PC-9 (cell line): ENCODE measurements at regions of chr9 and their contacts with region 1.

Region 1: DNA sequence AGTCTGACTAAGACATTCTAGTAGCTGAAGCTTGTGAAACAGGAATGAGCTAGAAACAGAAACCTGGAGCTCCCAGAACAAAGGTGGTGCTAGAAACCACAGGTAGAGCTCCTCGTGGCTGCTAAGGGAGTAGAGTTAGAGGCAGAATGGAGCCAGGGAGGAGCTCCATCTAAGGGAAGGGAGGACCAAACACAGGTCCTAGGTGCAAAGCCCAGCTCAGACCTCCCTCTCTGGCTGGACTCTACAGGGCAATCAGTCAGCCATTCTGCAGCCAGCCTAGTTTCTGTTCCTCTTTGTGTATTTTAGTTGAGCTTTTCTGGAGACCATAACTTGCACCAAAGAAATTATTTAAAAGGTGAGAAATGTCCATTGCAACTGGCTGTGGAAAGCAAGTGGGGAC is 70.4 kb downstream of the CRB2 start:
- DNase-seq: peak in 1 of 2 experiments; percentile 17
- H3K4me3 ChIP-seq: no peak overlapping the region
- H3K27ac ChIP-seq: no peak overlapping the region
- H3K4me1 ChIP-seq: peaks cover 8% of the 10 kb centered on the region; the same call in 1 of the 2 replicates
- H3K27me3 ChIP-seq: no peaks in the 10 kb centered on the region
- CTCF ChIP-seq: no peak

Region 2: GRCh38 chr9:124110307-124110915 is 684.0 kb after region 1 on chr9:
- CTCF ChIA-PET with region 1: no interaction called
- POLR2A ChIA-PET with region 1: no interaction called
- intact Hi-C with region 1: loop called (anchors 10 kb)
- DNase-seq: peak in 1 of 2 experiments; percentile 70
- H3K4me3 ChIP-seq: no peak overlapping the region
- H3K27ac ChIP-seq: no peak overlapping the region
- H3K4me1 ChIP-seq: no peaks in the 10 kb centered on the region
- H3K27me3 ChIP-seq: peaks cover 52% of the 10 kb centered on the region
- CTCF ChIP-seq: no peak